Right ventricle myocardium superior (tissue), 1 donor: ENCODE measurements at regions of chr4 and their contacts with region 1.

Region 1: GRCh38 chr4:8468746-8469535 is 28.4 kb downstream of the TRMT44 start:
- DNase-seq: peak; percentile 74
- ATAC-seq: peak; percentile 77

Region 2: GRCh38 chr4:8594097-8595038 is 125.4 kb after region 1 on chr4:
- intact Hi-C with region 1: loop called (anchors 5 kb)
- DNase-seq: peak; percentile 25
- ATAC-seq: peak; percentile 83

Region 3: GRCh38 chr4:8770518-8771257 is 301.7 kb after region 1 on chr4:
- intact Hi-C with region 1: no loop called
- DNase-seq: peak; percentile 20
- ATAC-seq: no peak